Activated CD4-positive, alpha-beta T cell treated with anti-CD3 and anti-CD28 coated beads for 36 hours (primary cell): ENCODE measurements at regions of chr9 and their contacts with region 1.

Region 1: DNA sequence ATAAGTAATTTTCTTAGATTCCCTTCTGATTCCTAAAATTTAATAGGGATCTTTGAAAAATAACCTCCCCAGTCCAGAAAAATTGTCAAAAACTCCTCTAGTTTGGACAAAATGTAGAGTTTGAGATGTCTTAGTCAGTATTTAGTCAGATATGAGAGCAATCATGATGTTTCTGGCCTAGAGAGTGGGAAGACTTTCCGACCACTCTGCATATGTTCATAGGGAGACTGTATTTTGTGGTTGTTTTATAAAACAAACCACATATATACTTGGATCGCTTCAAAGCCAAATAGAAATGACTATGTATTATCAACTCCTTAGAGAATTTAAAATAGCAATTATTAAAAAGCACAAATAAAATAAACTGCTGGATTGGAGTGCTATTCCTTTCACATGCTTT is 15.8 kb downstream of the ZFAND5 start:
- DNase-seq: peak; percentile 20
- ATAC-seq: peak; percentile 39
- H3K4me3 Mint-ChIP-seq: no peak overlapping the region
- H3K27ac Mint-ChIP-seq: no peak overlapping the region
- H3K4me1 Mint-ChIP-seq: peaks cover 10% of the 10 kb centered on the region
- H3K27me3 Mint-ChIP-seq: no peaks in the 10 kb centered on the region

Region 2: GRCh38 chr9:71928376-71928775 is 420.9 kb before region 1 on chr9:
- CTCF ChIA-PET with region 1: no interaction called
- POLR2A ChIA-PET with region 1: no interaction called
- intact Hi-C with region 1: no loop called
- DNase-seq: no peak
- ATAC-seq: no peak
- H3K4me3 Mint-ChIP-seq: no peak overlapping the region
- H3K27ac Mint-ChIP-seq: no peak overlapping the region
- H3K4me1 Mint-ChIP-seq: no peaks in the 10 kb centered on the region
- H3K27me3 Mint-ChIP-seq: no peaks in the 10 kb centered on the region

Region 3: DNA sequence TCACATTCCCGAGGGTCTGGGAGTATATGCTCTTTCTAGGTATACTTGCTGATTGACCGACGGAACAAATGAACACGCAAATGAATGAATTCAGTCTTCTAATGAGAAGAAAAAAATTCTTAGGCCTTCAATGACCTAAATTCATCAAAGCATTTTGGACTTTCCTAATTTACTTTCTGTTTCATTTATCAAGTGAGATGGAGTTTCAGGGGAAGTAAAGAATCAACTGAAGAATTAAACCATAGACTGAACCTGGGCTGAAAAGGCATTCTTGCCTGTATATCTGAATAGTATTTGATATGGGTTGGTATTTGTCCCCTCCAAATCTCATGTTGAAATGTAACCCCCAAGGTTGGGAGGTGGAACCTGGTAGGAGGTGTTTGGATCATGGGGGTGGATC is 48.4 kb before region 1 on chr9:
- CTCF ChIA-PET with region 1: no interaction called
- POLR2A ChIA-PET with region 1: no interaction called
- intact Hi-C with region 1: loop called in 1 of 2 experiments (anchors 5 kb)
- DNase-seq: no peak
- ATAC-seq: no peak
- H3K4me3 Mint-ChIP-seq: no peak overlapping the region
- H3K27ac Mint-ChIP-seq: no peak overlapping the region
- H3K4me1 Mint-ChIP-seq: peaks cover 24% of the 10 kb centered on the region
- H3K27me3 Mint-ChIP-seq: no peaks in the 10 kb centered on the region